ENCODE measurements at regions of chr7 and their contacts with region 1.

Region 1: GRCh38 chr7:79806161-79806734 is 328.4 kb upstream of the GNAI1 start:
- DNase-seq: no peak
- ATAC-seq: no peak

Region 2: GRCh38 chr7:79933144-79933543 is 126.9 kb after region 1 on chr7:
- intact Hi-C with region 1: no loop called
- DNase-seq: no peak
- ATAC-seq: peak in 1 of 2 donors; percentile 38

Region 3: GRCh38 chr7:80018941-80019752 is 212.9 kb after region 1 on chr7:
- intact Hi-C with region 1: loop called in 1 of 2 experiments (anchors 10 kb)
- DNase-seq: peak; percentile 27
- ATAC-seq: peak; percentile 53 to 65

Measured in left cardiac atrium (tissue), 4 donors.